MCF 10A (cell line): ENCODE measurements at regions of chr5 and their contacts with region 1.

Region 1: GRCh38 chr5:32709781-32710549 is 1.2 kb upstream of the NPR3 start:
- DNase-seq: peak; percentile 79
- H3K4me3 Mint-ChIP-seq: peak overlapping the region; percentile 83
- H3K27ac Mint-ChIP-seq: peak overlapping the region; percentile 25
- H3K4me1 Mint-ChIP-seq: peaks cover 6% of the 10 kb centered on the region
- H3K27me3 Mint-ChIP-seq: no peaks in the 10 kb centered on the region
- CTCF ChIP-seq: peak; percentile 64

Region 2: DNA sequence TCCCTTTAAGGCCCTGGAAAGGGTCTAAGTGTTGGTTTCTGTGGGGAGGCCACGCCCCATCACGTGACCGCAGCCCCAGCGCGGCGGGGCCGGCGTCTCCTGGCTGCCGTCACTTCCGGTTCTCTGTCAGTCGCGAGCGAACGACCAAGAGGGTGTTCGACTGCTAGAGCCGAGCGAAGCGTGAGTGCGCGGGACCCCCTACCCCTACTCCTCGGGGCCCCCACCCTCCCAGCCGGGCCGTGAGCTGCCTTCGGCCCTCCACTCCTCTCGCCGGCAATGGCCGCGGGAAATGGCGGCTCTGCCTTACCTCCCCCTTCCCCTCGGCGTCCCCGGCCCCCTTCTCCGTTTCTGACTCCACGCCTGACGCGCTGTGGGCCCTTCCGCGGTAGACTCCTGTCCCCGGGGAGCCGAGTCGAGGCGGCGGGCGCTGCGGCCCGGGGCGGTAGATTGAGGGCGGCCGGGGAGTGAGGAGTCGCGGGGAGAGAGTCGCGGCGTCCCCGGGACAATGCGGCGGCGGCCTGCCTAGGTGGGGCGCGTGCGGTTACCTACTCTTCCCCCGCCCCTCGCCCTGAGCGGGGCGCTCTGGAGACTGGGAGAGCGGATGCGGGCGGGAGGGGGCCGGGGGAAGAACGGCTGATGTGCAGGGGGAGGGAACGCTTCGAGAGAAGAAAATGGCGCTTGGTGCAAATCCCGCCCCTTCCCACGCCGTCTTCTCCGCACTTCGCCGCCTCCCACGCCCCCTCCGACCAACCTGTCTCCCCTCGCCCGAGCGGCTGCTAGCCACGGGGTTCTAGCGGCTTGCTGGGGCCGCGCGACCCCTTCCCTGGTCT is 124.3 kb before region 1 on chr5 and contains the start of gene SUB1:
- CTCF ChIA-PET with region 1: no interaction called
- POLR2A ChIA-PET with region 1: no interaction called
- intact Hi-C with region 1: no loop called
- DNase-seq: peak; percentile 92
- H3K4me3 Mint-ChIP-seq: peak within 1 kb of the TSS; percentile 95
- H3K27ac Mint-ChIP-seq: peak within 1 kb of the TSS; percentile 94
- H3K4me1 Mint-ChIP-seq: peaks cover 21% of the 10 kb centered on the region
- H3K27me3 Mint-ChIP-seq: no peaks in the 10 kb centered on the region
- CTCF ChIP-seq: no peak
- total RNA-seq, gene SUB1: 269 and 302 TPM in 2 replicates

Region 3: GRCh38 chr5:32852535-32852934 is 142.6 kb after region 1 on chr5:
- CTCF ChIA-PET with region 1: interaction called, 31 read pairs
- POLR2A ChIA-PET with region 1: no interaction called
- intact Hi-C with region 1: loop called (anchors 1 kb)
- DNase-seq: peak; percentile 76
- H3K4me3 Mint-ChIP-seq: no peak overlapping the region
- H3K27ac Mint-ChIP-seq: no peak overlapping the region
- H3K4me1 Mint-ChIP-seq: no peaks in the 10 kb centered on the region
- H3K27me3 Mint-ChIP-seq: no peaks in the 10 kb centered on the region
- CTCF ChIP-seq: no peak

Region 4: DNA sequence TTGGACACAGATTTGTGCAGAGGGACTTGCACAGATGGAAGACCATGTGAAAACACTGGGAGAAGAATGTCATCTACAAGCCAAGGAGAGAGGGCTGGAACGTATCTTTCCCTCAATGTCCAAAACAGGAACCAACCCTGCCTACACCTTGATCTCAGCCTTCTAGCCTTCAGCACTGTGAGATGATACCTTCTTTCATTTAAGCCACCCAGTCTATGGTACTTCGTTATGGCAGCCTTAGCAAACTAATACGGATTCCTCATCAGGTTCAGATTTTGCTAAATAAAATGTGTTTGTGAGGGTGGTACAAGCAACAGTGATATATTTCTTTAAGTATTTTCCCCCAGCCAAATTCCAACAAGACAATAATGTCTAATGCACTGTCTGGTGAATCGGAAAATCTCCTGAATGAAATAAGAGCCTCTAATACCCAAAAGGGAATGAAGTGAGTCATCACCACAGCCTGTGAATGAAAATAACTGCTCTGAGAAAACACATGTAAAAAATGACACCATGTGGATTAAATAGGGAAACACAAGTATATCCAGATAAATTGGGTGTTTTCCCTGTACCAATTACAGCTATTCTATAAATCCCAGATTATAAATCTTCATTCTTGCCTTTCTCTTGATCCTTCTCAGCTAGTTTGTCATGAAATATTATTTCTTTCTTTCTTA is 548.0 kb after region 1 on chr5:
- CTCF ChIA-PET with region 1: no interaction called
- POLR2A ChIA-PET with region 1: no interaction called
- intact Hi-C with region 1: loop called (anchors 2 kb)
- DNase-seq: peak; percentile 72
- H3K4me3 Mint-ChIP-seq: no peak overlapping the region
- H3K27ac Mint-ChIP-seq: peak overlapping the region; percentile 2
- H3K4me1 Mint-ChIP-seq: peaks cover 20% of the 10 kb centered on the region
- H3K27me3 Mint-ChIP-seq: no peaks in the 10 kb centered on the region
- CTCF ChIP-seq: peak; percentile 17